ENCODE measurements at regions of chr2 and their contacts with region 1.

Region 1: DNA sequence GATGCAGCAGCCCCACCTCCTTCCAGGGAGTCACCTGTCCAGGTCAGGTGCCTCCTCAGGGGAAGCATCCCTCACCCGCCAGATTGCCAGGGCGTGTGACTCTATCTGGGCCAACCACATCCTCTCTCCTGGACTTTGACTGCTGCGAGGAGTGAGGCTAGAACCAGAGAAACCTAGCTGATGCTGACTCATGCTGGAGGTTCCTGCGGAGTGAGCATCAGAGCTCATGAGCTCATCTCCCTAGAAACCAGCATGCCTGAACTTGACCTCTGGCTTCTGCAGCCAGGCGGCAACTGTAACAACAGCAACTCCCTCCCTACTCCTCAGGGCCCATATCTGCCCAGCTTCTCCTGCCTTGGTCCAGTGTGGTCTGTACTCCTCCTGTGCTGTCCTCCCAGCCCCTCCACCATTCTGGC is 28.3 kb upstream of the NT5DC4 start:
- DNase-seq: peak; percentile 73
- H3K4me3 ChIP-seq: no peak overlapping the region
- H3K27ac ChIP-seq: peak overlapping the region; percentile 72
- H3K4me1 ChIP-seq: peaks cover 41% of the 10 kb centered on the region
- H3K27me3 ChIP-seq: no peaks in the 10 kb centered on the region
- CTCF ChIP-seq: no peak
- POLR2A ChIP-seq: no peak

Region 2: DNA sequence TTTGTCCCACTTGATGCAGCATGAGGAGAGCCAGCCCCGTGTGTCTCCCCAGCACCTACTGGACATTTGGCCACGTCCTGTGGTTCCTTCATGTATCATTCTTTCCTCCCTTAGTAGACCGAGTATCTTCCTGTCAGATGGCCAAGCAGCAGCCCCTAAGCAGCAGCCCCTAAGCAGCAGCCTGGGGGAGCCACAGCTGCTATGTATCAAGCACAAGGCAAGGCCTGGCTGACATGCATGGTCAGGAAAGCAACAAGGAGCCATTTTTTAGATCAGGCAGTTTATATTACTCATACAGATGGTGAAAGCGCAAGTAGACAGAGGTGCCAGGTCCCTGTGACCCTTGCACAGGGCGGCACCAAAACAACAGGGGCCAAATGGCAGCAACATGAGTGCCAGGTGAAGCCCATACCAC is 86.0 kb before region 1 on chr2:
- CTCF ChIA-PET with region 1: interaction called, 27 read pairs
- POLR2A ChIA-PET with region 1: no interaction called
- dilution Hi-C with region 1: no loop called
- intact Hi-C with region 1: no loop called
- DNase-seq: no peak
- H3K4me3 ChIP-seq: no peak overlapping the region
- H3K27ac ChIP-seq: no peak overlapping the region
- H3K4me1 ChIP-seq: no peaks in the 10 kb centered on the region
- H3K27me3 ChIP-seq: no peaks in the 10 kb centered on the region
- CTCF ChIP-seq: no peak
- POLR2A ChIP-seq: no peak

Region 3: DNA sequence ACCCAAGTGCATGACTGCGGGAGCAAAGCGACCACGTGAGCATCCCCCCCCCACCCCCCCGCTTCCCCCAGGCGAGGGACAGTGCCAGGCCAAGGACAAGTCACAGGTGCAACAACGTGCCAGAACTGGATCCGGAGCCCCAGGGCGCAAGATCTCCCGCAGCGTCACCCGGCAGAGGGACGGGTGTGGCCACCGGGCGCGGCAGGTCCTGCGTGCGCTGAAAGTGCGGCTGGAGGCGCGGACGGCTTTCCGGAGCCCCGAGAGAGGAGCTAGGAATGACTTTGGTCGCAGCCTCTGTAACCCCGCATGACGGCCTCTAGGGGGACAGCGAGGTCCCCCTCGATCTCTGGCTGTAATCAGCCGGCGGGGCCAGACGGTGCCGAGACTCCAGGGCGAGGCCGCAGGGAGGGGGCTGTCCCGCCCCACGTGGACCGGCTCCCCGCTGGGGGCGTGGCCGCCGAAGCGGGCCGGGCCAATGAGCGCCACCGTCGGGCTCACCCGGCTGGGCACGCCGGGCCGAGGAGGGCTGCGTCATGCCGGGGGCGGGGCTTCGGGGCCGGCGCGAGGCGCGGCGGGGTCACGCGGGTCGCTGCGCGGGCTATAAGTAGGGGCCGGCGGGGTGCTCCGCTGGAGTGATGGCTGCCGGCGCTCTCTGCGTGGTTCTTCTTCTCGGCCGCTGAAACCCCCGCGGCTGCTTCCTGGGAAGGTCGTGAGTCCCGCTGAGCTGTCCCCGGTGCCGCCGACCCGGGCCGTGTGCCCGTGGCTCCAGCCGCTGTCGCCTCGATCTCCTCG is 47.0 kb before region 1 on chr2 and contains the start of gene SLC20A1:
- CTCF ChIA-PET with region 1: interaction called, 21 read pairs
- POLR2A ChIA-PET with region 1: interaction called, 5 read pairs
- dilution Hi-C with region 1: no loop called
- intact Hi-C with region 1: loop called (anchors 1 kb)
- DNase-seq: peak; percentile 91
- H3K4me3 ChIP-seq: peak within 1 kb of the TSS; percentile 84 to 90 (median 89)
- H3K27ac ChIP-seq: peak within 1 kb of the TSS; percentile 90
- H3K4me1 ChIP-seq: peaks cover 71% of the 10 kb centered on the region
- H3K27me3 ChIP-seq: no peaks in the 10 kb centered on the region
- CTCF ChIP-seq: peak; percentile 38 to 40
- POLR2A ChIP-seq: peak; percentile 98
- total RNA-seq, gene SLC20A1: 141 and 149 TPM in 2 replicates

Region 4: GRCh38 chr2:112674229-112674628 is 18.3 kb before region 1 on chr2:
- CTCF ChIA-PET with region 1: interaction called, 34 read pairs
- POLR2A ChIA-PET with region 1: no interaction called
- dilution Hi-C with region 1: no loop called
- intact Hi-C with region 1: loop called (anchors 2 kb)
- DNase-seq: peak; percentile 85
- H3K4me3 ChIP-seq: no peak overlapping the region
- H3K27ac ChIP-seq: peak overlapping the region; percentile 67
- H3K4me1 ChIP-seq: peaks cover 33% of the 10 kb centered on the region
- H3K27me3 ChIP-seq: no peaks in the 10 kb centered on the region
- CTCF ChIP-seq: no peak
- POLR2A ChIP-seq: no peak

Region 5: DNA sequence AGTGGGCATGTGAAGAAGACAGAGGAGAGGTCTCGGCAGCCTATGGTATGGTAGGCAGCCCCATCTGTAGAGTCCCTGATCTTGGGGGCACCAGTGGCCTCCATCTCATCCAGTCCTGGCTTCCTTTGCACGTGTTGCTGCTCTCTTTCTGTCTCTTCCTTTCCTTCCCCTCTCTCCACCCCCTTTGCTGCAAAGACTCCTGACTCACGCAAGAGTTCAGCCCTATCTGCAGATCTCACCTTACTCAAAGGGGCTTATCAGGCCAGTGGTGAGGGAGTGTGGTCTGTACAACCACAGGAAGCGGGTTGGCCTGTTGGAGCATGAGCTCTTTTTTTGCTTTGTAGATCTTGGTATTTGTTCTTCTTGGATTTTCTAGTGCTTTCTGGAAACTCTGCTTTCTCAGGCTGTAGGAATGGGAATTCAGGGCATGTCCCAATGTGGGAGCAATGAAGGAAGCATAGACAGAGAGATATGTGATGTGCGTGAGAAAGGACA is 13.7 kb after region 1 on chr2:
- CTCF ChIA-PET with region 1: interaction called, 16 read pairs
- POLR2A ChIA-PET with region 1: no interaction called
- dilution Hi-C with region 1: no loop called
- intact Hi-C with region 1: no loop called
- DNase-seq: no peak
- H3K4me3 ChIP-seq: no peak overlapping the region
- H3K27ac ChIP-seq: no peak overlapping the region
- H3K4me1 ChIP-seq: peaks cover 6% of the 10 kb centered on the region
- H3K27me3 ChIP-seq: no peaks in the 10 kb centered on the region
- CTCF ChIP-seq: no peak
- POLR2A ChIP-seq: no peak

Region 6: DNA sequence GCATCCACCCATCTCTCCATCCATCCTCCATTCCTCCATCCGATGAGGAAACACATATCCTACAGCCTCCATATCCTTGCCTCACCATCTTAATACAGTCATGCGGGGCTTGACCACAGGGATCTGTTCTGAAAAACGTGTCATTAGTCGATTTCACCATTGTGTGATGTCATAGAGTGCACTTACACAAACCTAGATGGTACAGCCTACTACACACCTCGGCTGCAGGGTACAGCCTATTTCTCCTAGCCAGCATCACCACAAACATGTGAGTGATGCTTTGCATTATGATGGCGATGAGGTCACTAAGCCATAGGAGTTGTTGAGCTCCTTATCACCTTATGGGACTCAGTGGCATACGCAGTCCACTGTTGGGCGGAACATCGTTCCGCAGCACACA is 26.4 kb after region 1 on chr2:
- CTCF ChIA-PET with region 1: no interaction called
- POLR2A ChIA-PET with region 1: no interaction called
- dilution Hi-C with region 1: no loop called
- intact Hi-C with region 1: no loop called
- DNase-seq: no peak
- H3K4me3 ChIP-seq: no peak overlapping the region
- H3K27ac ChIP-seq: no peak overlapping the region
- H3K4me1 ChIP-seq: no peaks in the 10 kb centered on the region
- H3K27me3 ChIP-seq: peaks cover 0 to 7% of the 10 kb centered on the region in 2 experiments
- CTCF ChIP-seq: no peak
- POLR2A ChIP-seq: no peak

Region 7: DNA sequence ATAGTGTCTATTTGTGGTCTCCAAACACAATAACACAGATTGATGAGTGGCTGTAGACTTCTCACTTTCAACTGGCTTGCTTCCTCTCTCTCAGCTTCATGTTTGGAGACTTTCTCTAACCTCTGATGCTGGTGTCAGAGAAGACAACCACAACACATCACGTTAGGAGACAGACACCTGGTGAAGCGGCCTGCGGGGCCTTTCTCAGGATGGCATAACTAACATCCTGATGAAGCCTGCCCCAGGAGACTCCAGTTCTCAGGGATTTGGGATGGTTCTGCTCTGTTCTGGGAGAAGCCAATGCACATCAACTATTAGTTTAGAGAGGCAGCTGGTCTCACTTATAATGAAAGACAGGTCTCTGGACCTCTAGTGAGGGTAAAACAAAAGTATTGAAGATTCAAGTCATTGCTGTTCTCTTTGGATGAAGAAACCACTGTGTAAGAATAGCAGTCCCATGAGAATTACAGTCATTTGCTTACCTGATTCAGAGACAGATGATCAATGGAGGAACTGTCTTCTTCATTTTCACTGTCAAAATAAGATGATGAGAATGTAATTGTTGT is 89.8 kb after region 1 on chr2:
- CTCF ChIA-PET with region 1: no interaction called
- POLR2A ChIA-PET with region 1: no interaction called
- dilution Hi-C with region 1: no loop called
- intact Hi-C with region 1: no loop called
- DNase-seq: no peak
- H3K4me3 ChIP-seq: no peak overlapping the region
- H3K27ac ChIP-seq: no peak overlapping the region
- H3K4me1 ChIP-seq: peaks cover 33% of the 10 kb centered on the region
- H3K27me3 ChIP-seq: no peaks in the 10 kb centered on the region
- CTCF ChIP-seq: no peak
- POLR2A ChIP-seq: no peak

Region 8: GRCh38 chr2:112836695-112837117 is 144.2 kb after region 1 on chr2 and contains the start of gene IL1B:
- CTCF ChIA-PET with region 1: no interaction called
- POLR2A ChIA-PET with region 1: no interaction called
- dilution Hi-C with region 1: no loop called
- intact Hi-C with region 1: no loop called
- DNase-seq: peak; percentile 11
- H3K4me3 ChIP-seq: no peak within 1 kb of the TSS
- H3K27ac ChIP-seq: no peak within 1 kb of the TSS
- H3K4me1 ChIP-seq: peaks cover 10% of the 10 kb centered on the region
- H3K27me3 ChIP-seq: peaks cover 0 to 19% of the 10 kb centered on the region in 2 experiments
- CTCF ChIP-seq: no peak
- POLR2A ChIP-seq: no peak
- total RNA-seq, gene IL1B: not detected in 2 replicates

Measured in endothelial cell of umbilical vein (primary cell).